GM12878 (cell line): ENCODE measurements at regions of chr10 and their contacts with region 1.

Region 1: DNA sequence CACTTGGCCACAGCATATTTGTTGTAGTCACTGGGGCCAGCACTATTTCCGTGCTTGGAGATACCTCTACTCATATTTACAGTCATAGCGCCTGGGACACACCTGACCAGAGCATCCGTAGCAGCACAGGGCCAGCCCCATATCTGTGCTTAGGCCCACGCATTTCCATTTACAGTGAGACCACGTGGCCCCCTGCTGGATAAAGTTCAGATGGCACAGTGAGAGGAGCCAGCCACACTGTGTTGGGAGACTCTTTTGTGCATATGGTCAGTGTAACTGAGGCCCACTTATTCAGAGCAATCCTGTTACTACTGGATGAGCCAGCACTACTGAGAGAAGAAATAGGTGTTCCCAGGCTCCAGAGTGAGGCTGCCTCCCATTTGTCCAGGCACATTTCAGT is 455.3 kb downstream of the REEP3 start:
- DNase-seq: no peak
- ATAC-seq: peak; percentile 99
- H3K4me3 ChIP-seq: no peak overlapping the region
- H3K27ac ChIP-seq: no peak overlapping the region
- H3K4me1 ChIP-seq: no peaks in the 10 kb centered on the region; the same call in 1 of the 2 replicates
- H3K27me3 ChIP-seq: no peaks in the 10 kb centered on the region
- CTCF ChIP-seq: peak; percentile 57 to 77 (median 76)
- EP300 ChIP-seq: no peak
- POLR2A ChIP-seq: no peak
- RAD21 ChIP-seq: peak; percentile 63

Region 2: GRCh38 chr10:63583909-63584724 is 392.4 kb before region 1 on chr10:
- CTCF ChIA-PET with region 1: no interaction called
- POLR2A ChIA-PET with region 1: no interaction called
- RAD21 ChIA-PET with region 1: no interaction called
- SMC1A ChIA-PET with region 1: no interaction called
- in situ Hi-C with region 1: no loop called
- intact Hi-C with region 1: no loop called
- DNase-seq: no peak
- ATAC-seq: no peak
- H3K4me3 ChIP-seq: no peak overlapping the region
- H3K27ac ChIP-seq: no peak overlapping the region
- H3K4me1 ChIP-seq: no peaks in the 10 kb centered on the region
- H3K27me3 ChIP-seq: no peaks in the 10 kb centered on the region
- CTCF ChIP-seq: no peak
- EP300 ChIP-seq: no peak
- POLR2A ChIP-seq: no peak
- RAD21 ChIP-seq: no peak

Region 3: GRCh38 chr10:63798599-63799498 is 177.7 kb before region 1 on chr10:
- CTCF ChIA-PET with region 1: no interaction called
- POLR2A ChIA-PET with region 1: no interaction called
- RAD21 ChIA-PET with region 1: no interaction called
- SMC1A ChIA-PET with region 1: no interaction called
- in situ Hi-C with region 1: no loop called
- intact Hi-C with region 1: no loop called
- DNase-seq: no peak
- ATAC-seq: no peak
- H3K4me3 ChIP-seq: no peak overlapping the region
- H3K27ac ChIP-seq: no peak overlapping the region
- H3K4me1 ChIP-seq: no peaks in the 10 kb centered on the region
- H3K27me3 ChIP-seq: peaks cover 0 to 2% of the 10 kb centered on the region in 2 experiments; a peak in 1 of 4 replicates
- CTCF ChIP-seq: no peak
- EP300 ChIP-seq: no peak
- POLR2A ChIP-seq: no peak
- RAD21 ChIP-seq: no peak

Region 4: GRCh38 chr10:63866075-63866746 is 110.3 kb before region 1 on chr10:
- CTCF ChIA-PET with region 1: interaction called, 53 read pairs
- POLR2A ChIA-PET with region 1: no interaction called
- RAD21 ChIA-PET with region 1: interaction called, 10 read pairs
- SMC1A ChIA-PET with region 1: interaction called, 11 read pairs
- in situ Hi-C with region 1: loop called (anchors 5 kb)
- intact Hi-C with region 1: no loop called
- DNase-seq: peak; percentile 5
- ATAC-seq: peak; percentile 95
- H3K4me3 ChIP-seq: no peak overlapping the region
- H3K27ac ChIP-seq: no peak overlapping the region
- H3K4me1 ChIP-seq: no peaks in the 10 kb centered on the region
- H3K27me3 ChIP-seq: no peaks in the 10 kb centered on the region
- CTCF ChIP-seq: peak; percentile 80 to 88 (median 82)
- EP300 ChIP-seq: no peak
- POLR2A ChIP-seq: no peak
- RAD21 ChIP-seq: peak; percentile 61

Region 5: DNA sequence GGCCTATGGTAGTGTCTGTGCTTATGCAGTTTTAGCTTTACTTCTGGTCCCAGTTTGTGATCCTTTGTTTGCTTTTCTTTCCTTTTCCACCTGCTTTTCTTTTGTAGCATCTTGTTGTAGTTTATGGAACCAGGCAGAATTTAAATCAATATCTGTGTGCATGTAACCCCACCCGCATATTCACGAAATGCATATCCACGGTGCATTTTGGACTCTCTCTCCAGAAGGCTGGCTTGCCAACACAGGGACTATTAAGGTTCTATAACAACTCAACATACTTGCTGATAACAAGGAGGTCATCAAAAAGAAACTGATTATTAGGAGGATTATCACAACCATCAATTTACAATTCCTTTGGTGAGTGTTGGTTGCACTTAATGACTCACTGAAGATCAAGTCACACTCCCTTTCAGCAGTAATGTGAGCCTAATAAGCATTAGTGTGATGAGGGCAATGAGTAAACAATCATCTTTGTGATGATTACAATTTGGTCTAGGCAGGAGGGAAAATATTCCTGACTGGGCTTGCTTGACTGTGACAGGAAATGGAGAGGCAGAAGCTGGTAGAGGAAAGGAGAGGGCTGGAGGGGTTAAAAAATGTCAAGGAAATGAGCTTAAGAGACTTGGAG is 76.8 kb before region 1 on chr10:
- CTCF ChIA-PET with region 1: no interaction called
- POLR2A ChIA-PET with region 1: no interaction called
- RAD21 ChIA-PET with region 1: interaction called, 3 read pairs
- SMC1A ChIA-PET with region 1: interaction called, 8 read pairs
- in situ Hi-C with region 1: no loop called
- intact Hi-C with region 1: loop called (anchors 5 kb)
- DNase-seq: no peak
- ATAC-seq: no peak
- H3K4me3 ChIP-seq: no peak overlapping the region
- H3K27ac ChIP-seq: no peak overlapping the region
- H3K4me1 ChIP-seq: no peaks in the 10 kb centered on the region
- H3K27me3 ChIP-seq: no peaks in the 10 kb centered on the region; a peak in 1 of 4 replicates
- CTCF ChIP-seq: no peak
- EP300 ChIP-seq: no peak
- POLR2A ChIP-seq: no peak
- RAD21 ChIP-seq: no peak

Region 6: DNA sequence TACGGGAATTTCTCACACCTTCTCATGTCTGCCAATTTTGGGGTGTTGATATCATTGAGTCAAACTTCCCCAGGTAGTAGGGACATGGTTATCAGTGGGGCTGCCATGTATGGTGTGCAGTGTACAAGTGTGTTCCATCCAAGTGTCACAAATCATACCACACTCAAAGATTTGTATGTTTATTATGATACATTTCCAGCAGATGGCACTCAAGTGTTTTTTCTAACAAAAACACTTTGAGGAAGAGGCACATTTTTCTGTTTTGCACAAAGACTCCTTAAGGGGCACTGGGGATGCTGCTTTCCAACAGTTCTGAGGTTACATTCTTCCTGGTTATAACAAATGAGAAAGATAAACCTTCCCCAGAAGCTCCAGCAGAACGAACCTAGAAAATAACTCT is 40.8 kb before region 1 on chr10:
- CTCF ChIA-PET with region 1: interaction called, 12 read pairs
- POLR2A ChIA-PET with region 1: no interaction called
- RAD21 ChIA-PET with region 1: no interaction called
- SMC1A ChIA-PET with region 1: interaction called, 3 read pairs
- in situ Hi-C with region 1: no loop called
- intact Hi-C with region 1: loop called (anchors 1 kb)
- DNase-seq: no peak
- ATAC-seq: peak; percentile 60; the same call in 2 of the 3 replicates
- H3K4me3 ChIP-seq: no peak overlapping the region
- H3K27ac ChIP-seq: no peak overlapping the region
- H3K4me1 ChIP-seq: no peaks in the 10 kb centered on the region
- H3K27me3 ChIP-seq: peaks cover 0 to 2% of the 10 kb centered on the region in 2 experiments; a peak in 1 of 4 replicates
- CTCF ChIP-seq: peak in 1 of 3 experiments; percentile 24; a peak in 1 of 6 replicates
- EP300 ChIP-seq: no peak
- POLR2A ChIP-seq: no peak
- RAD21 ChIP-seq: 0 out of 2 replicates have a peak, but pooled peaks have one; percentile 4

Region 7: DNA sequence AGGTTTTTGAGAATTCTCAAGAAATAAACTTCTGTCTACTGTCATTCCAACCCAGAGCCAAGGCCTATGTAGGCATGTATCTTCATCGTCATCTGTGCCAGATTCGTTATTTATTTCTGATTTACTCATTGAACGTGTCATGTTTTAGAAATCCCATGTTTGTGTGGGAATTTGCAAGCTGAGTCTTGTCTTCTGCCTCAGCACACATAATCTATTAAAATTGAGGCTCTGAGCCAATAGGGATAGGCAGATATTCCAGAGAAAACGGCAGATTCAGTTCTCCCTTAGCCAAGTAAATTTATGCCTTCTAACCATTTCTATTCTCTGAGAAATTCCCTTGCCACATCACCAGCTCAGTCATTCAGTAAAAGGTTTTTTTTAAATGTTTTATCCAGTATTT is 10.7 kb before region 1 on chr10:
- CTCF ChIA-PET with region 1: interaction called, 15 read pairs
- POLR2A ChIA-PET with region 1: no interaction called
- RAD21 ChIA-PET with region 1: no interaction called
- SMC1A ChIA-PET with region 1: interaction called, 4 read pairs
- in situ Hi-C with region 1: no loop called
- intact Hi-C with region 1: no loop called
- DNase-seq: no peak
- ATAC-seq: no peak
- H3K4me3 ChIP-seq: no peak overlapping the region
- H3K27ac ChIP-seq: no peak overlapping the region
- H3K4me1 ChIP-seq: no peaks in the 10 kb centered on the region
- H3K27me3 ChIP-seq: no peaks in the 10 kb centered on the region
- CTCF ChIP-seq: no peak
- EP300 ChIP-seq: no peak
- POLR2A ChIP-seq: no peak
- RAD21 ChIP-seq: no peak

Region 8: DNA sequence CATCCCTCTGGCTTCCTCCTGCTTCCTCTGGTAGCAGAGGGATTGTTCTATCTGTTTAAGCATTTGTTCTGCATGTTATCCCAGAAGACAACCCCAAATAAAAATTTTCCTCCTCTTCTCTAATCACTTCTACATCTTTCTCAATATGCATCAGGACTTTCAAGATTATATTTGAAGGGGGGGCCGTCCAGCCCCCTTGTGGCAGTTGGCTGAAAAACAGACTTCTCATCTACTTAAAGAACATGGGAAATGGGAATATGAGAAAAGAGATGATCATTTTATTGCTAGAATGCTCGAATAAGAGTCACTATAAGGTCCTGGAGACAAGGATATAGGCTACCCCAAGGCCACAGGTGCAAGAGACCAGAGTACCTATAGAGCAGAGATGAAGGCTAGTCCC is 10.7 kb after region 1 on chr10:
- CTCF ChIA-PET with region 1: interaction called, 10 read pairs
- POLR2A ChIA-PET with region 1: no interaction called
- RAD21 ChIA-PET with region 1: no interaction called
- SMC1A ChIA-PET with region 1: interaction called, 3 read pairs
- in situ Hi-C with region 1: no loop called
- intact Hi-C with region 1: no loop called
- DNase-seq: no peak
- ATAC-seq: no peak
- H3K4me3 ChIP-seq: no peak overlapping the region
- H3K27ac ChIP-seq: no peak overlapping the region
- H3K4me1 ChIP-seq: no peaks in the 10 kb centered on the region
- H3K27me3 ChIP-seq: no peaks in the 10 kb centered on the region
- CTCF ChIP-seq: no peak
- EP300 ChIP-seq: no peak
- POLR2A ChIP-seq: no peak
- RAD21 ChIP-seq: no peak